ENCODE measurements at regions of chr1 and their contacts with region 1.

Region 1: GRCh38 chr1:94335950-94336349 is 82.2 kb upstream of the ABCD3 start:
- DNase-seq: peak; percentile 97
- ATAC-seq: peak; percentile 68
- H3K4me3 ChIP-seq: no peak overlapping the region
- H3K27ac ChIP-seq: no peak overlapping the region
- H3K4me1 ChIP-seq: peaks cover 37% of the 10 kb centered on the region
- H3K27me3 ChIP-seq: no peaks in the 10 kb centered on the region
- CTCF ChIP-seq: peak; percentile 99

Region 2: GRCh38 chr1:94025383-94026340 is 310.3 kb before region 1 on chr1:
- CTCF ChIA-PET with region 1: interaction called, 36 read pairs
- POLR2A ChIA-PET with region 1: interaction called, 4 read pairs
- intact Hi-C with region 1: loop called (anchors 1 kb)
- DNase-seq: peak; percentile 90
- ATAC-seq: peak; percentile 76
- H3K4me3 ChIP-seq: peak overlapping the region; percentile 79
- H3K27ac ChIP-seq: no peak overlapping the region
- H3K4me1 ChIP-seq: peaks cover 22% of the 10 kb centered on the region; the same call in 1 of the 2 replicates
- H3K27me3 ChIP-seq: no peaks in the 10 kb centered on the region
- CTCF ChIP-seq: peak; percentile 90

Region 3: DNA sequence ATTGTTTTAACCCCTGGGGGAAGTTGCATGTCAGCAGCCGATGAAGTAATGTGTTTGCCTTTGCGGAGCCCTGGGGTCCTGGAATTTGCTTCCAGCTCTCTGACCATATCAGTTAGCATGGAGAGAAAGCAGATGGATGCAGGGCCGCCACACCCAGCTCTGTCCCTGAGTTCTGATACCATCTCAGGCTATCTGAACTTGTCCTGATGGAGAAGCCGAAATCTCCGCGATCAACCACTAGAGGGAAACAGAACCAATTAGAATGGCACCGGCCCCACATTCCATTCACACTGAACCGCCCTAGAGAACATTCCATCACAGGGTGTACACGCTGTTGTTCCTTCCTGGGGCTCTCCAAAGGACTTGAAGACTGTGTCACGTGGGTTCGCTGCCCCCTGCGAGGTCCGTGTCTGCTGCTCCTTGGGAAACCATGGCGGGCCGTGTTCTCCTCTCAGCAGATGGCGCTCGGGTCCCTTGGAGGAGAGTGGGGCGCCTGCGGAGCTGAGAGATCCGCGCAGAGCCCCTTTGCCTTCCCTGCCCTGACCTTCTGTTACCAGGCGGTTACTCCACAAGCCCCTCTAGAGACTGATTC is 290.4 kb before region 1 on chr1:
- CTCF ChIA-PET with region 1: interaction called, 22 read pairs
- POLR2A ChIA-PET with region 1: no interaction called
- intact Hi-C with region 1: loop called (anchors 1 kb)
- DNase-seq: peak; percentile 94
- ATAC-seq: peak; percentile 88
- H3K4me3 ChIP-seq: no peak overlapping the region
- H3K27ac ChIP-seq: no peak overlapping the region
- H3K4me1 ChIP-seq: peaks cover 29% of the 10 kb centered on the region
- H3K27me3 ChIP-seq: no peaks in the 10 kb centered on the region
- CTCF ChIP-seq: peak; percentile 88

Region 4: GRCh38 chr1:94237291-94238226 is 98.4 kb before region 1 on chr1 and contains the start of gene ARHGAP29:
- CTCF ChIA-PET with region 1: interaction called, 4 read pairs
- POLR2A ChIA-PET with region 1: interaction called, 14 read pairs
- intact Hi-C with region 1: no loop called
- DNase-seq: peak; percentile 94
- ATAC-seq: peak; percentile 72
- H3K4me3 ChIP-seq: peak within 1 kb of the TSS; percentile 96
- H3K27ac ChIP-seq: peak within 1 kb of the TSS; percentile 77
- H3K4me1 ChIP-seq: peaks cover 64% of the 10 kb centered on the region
- H3K27me3 ChIP-seq: no peaks in the 10 kb centered on the region
- CTCF ChIP-seq: no peak
- total RNA-seq, gene ARHGAP29: 161 and 166 TPM in 2 replicates

Region 5: DNA sequence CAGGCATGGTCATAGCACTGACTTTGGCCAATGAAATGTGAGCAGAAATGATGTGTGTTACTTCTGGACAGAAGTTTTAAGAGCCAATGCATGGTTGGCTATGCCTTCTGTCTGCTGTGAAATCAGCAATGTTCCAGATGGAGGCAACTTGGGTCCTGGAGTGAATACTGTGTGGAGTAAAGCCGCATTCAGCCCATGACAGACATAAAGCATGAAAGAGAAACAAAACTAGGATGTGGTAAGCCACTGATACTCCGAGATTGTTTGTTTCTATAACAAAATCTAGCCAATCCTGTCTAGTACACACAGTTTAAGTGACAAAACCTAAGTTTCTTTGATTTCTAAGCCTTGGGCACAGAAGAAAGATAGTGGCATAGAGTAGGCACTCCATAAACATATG is 51.5 kb before region 1 on chr1:
- CTCF ChIA-PET with region 1: no interaction called
- POLR2A ChIA-PET with region 1: no interaction called
- intact Hi-C with region 1: no loop called
- DNase-seq: no peak
- ATAC-seq: no peak
- H3K4me3 ChIP-seq: no peak overlapping the region
- H3K27ac ChIP-seq: peak overlapping the region; percentile 48; the same call in 1 of the 2 replicates
- H3K4me1 ChIP-seq: peaks cover 49% of the 10 kb centered on the region
- H3K27me3 ChIP-seq: no peaks in the 10 kb centered on the region
- CTCF ChIP-seq: no peak

Region 6: GRCh38 chr1:94383966-94384408 is 48.0 kb after region 1 on chr1:
- CTCF ChIA-PET with region 1: no interaction called
- POLR2A ChIA-PET with region 1: no interaction called
- intact Hi-C with region 1: no loop called
- DNase-seq: peak; percentile 73
- ATAC-seq: peak; percentile 85
- H3K4me3 ChIP-seq: no peak overlapping the region
- H3K27ac ChIP-seq: no peak overlapping the region
- H3K4me1 ChIP-seq: peaks cover 17% of the 10 kb centered on the region
- H3K27me3 ChIP-seq: no peaks in the 10 kb centered on the region
- CTCF ChIP-seq: no peak

Region 7: GRCh38 chr1:94634977-94635416 is 299.0 kb after region 1 on chr1:
- CTCF ChIA-PET with region 1: no interaction called
- POLR2A ChIA-PET with region 1: no interaction called
- intact Hi-C with region 1: no loop called
- DNase-seq: no peak
- ATAC-seq: no peak; the same call in 1 of the 2 replicates
- H3K4me3 ChIP-seq: no peak overlapping the region
- H3K27ac ChIP-seq: no peak overlapping the region
- H3K4me1 ChIP-seq: no peaks in the 10 kb centered on the region
- H3K27me3 ChIP-seq: no peaks in the 10 kb centered on the region
- CTCF ChIP-seq: no peak

Region 8: GRCh38 chr1:94805912-94806311 is 470.0 kb after region 1 on chr1:
- CTCF ChIA-PET with region 1: no interaction called
- POLR2A ChIA-PET with region 1: no interaction called
- intact Hi-C with region 1: loop called (anchors 10 kb)
- DNase-seq: peak; percentile 77
- ATAC-seq: peak; percentile 36; the same call in 1 of the 2 replicates
- H3K4me3 ChIP-seq: no peak overlapping the region
- H3K27ac ChIP-seq: no peak overlapping the region
- H3K4me1 ChIP-seq: peaks cover 6% of the 10 kb centered on the region
- H3K27me3 ChIP-seq: no peaks in the 10 kb centered on the region
- CTCF ChIP-seq: peak; percentile 92

Measured in PC-3 (cell line).